Activated T-helper 2 cell treated with anti-CD3 and anti-CD28 coated beads, Interferon-gamma antibody, Interleukin-2, Interleukin-4, amounts not matched to agents 10 μg/mL and 5 μg/mL and 100 μg/mL, durations not matched to agents 14 hours and 24 hours and 36 hours (primary cell): ENCODE measurements at regions of chr5 and their contacts with region 1.

Region 1: DNA sequence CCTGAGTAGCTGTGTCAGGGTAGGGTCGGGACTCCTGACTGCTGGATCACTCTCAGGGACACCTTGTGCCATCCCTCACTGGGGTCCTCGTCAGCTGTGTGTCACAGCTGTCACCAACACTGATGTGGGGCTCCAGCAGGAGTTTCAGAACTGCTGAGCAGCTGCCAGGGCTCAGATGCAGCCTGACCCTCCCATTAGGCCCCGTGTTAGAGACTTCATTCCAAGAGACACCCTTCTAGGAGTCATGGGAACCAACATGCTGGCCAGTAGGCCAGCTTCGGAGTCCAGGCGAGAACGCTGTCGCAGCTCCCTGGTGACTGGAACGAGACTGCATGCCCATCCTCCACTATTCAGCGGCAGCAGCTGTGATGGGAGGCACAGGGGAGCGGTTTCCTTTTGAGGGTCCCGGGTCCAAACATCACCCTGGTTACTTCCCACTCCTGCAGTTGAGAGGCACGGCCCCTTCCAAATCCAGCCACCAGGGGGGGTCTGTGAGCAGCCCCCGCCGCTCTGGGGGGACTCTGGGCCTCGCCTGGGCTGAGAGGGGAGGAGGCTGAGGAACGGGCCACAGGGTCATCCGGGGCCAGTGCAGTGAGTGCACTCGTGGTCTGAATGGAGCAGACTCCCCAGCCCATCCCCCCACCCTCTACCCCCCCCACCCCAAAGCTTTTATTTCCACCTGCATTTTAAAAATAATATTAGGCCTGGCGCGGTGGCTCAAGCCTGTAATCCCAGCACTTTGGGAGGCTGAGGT is 12.6 kb upstream of the TCF7 start:
- DNase-seq: peak; percentile 57
- H3K4me3 Mint-ChIP-seq: no peak overlapping the region
- H3K27ac Mint-ChIP-seq: no peak overlapping the region
- H3K4me1 Mint-ChIP-seq: peaks cover 49% of the 10 kb centered on the region
- H3K27me3 Mint-ChIP-seq: peaks cover 33% of the 10 kb centered on the region

Region 2: GRCh38 chr5:134046801-134047686 is 54.8 kb before region 1 on chr5:
- intact Hi-C with region 1: no loop called
- DNase-seq: no peak
- H3K4me3 Mint-ChIP-seq: no peak overlapping the region
- H3K27ac Mint-ChIP-seq: no peak overlapping the region
- H3K4me1 Mint-ChIP-seq: no peaks in the 10 kb centered on the region
- H3K27me3 Mint-ChIP-seq: peaks cover 14% of the 10 kb centered on the region

Region 3: DNA sequence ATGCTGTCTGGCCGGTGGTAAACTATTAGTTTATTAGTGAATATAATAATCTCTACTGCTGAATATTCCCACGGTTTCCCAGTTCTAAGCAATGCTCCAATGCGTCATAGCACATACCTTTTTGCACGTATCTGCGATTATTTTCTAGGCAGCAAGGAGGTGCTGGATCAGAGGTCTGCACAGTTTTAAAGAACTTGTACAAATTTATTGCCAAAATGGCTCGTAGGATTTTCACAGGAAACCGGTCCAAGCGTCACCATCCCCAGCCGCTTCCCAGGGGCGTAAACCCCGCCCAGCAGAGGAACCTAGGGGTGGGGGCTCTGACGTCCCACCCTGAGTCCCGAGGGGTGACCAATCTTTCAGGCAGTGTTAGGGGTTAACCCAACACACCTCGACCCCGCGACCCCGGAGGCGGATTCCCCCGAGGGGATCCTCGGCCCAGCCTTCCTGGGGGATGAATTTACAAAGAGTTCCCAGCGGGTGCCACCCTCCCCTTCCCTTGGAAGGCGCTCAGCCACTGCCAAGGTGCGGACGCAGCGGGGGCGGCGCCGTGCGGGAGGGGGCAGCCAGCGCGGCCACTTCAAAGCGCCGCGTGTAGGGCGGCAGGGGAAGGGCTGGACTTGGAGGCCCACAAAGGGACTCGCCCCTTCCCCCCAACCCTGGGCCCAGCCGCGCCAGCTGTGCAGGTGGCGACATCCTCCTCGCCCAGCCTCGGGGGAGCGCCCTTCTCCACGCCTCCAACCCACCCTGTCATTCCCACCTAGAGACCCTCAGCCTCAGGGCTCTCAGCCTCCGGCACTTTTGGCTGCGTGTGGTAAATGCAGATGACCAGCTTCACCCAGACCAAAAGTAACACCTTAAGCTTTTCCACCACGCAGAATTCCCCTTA is 30.9 kb before region 1 on chr5:
- intact Hi-C with region 1: loop called (anchors 1 kb)
- DNase-seq: no peak
- H3K4me3 Mint-ChIP-seq: peak overlapping the region; percentile 27
- H3K27ac Mint-ChIP-seq: peak overlapping the region; percentile 48
- H3K4me1 Mint-ChIP-seq: peaks cover 34% of the 10 kb centered on the region
- H3K27me3 Mint-ChIP-seq: peaks cover 59% of the 10 kb centered on the region

Region 4: GRCh38 chr5:134086943-134087305 is 14.9 kb before region 1 on chr5:
- intact Hi-C with region 1: loop called (anchors 1 kb)
- DNase-seq: peak; percentile 76
- H3K4me3 Mint-ChIP-seq: peak overlapping the region; percentile 31
- H3K27ac Mint-ChIP-seq: peak overlapping the region; percentile 76
- H3K4me1 Mint-ChIP-seq: peaks cover 46% of the 10 kb centered on the region
- H3K27me3 Mint-ChIP-seq: peaks cover 57% of the 10 kb centered on the region

Region 5: DNA sequence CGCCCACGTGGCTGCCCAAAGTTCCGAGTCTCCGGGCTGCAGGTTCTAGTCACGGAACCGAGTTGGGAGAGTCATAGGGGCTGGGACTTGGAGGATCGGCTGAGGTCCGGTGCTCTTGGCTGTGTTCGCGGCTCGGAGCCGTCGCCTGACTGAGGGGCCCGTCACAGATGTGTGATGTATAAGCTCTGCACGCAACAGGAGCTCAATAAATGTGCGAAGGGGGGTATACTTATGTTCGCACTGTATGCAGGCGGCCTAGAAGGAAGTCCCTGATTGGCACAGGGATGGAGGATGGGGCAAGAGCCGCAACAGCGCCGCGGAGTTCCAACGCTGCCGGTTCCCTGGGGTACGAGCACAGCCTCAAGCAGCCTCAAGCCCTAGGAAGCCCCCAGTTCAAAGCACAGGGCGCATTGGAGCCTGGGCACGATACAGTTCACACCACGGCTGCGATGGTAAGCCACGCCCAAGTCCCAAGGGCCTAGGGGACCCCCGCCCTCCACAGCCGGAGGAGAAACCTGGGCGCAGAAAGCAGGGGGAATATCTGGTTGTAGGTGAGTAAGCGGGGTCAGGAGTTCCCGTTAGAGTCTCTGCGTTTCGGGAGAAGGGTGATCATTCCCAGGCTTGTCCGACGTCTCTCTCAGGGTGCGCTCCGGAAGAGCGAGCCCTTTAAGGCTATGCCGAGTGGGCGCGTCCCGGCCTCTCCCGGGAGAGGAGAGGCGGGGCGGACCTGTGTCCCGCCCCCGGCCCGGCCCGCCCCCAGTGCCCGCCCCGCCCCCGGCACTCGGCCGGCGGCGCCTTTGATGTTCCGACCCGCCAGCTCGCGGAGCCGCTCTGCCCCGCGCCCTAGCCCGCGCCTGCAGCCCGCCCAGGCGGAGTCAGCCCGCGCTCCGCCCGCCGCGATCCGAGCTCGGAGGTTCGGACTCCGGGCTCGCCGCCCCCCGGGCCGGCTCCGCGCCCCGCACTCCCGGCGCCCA is 12.3 kb after region 1 on chr5 and contains the start of gene TCF7:
- intact Hi-C with region 1: loop called (anchors 1 kb)
- DNase-seq: peak; percentile 61
- H3K4me3 Mint-ChIP-seq: peak within 1 kb of the TSS; percentile 76
- H3K27ac Mint-ChIP-seq: peak within 1 kb of the TSS; percentile 28
- H3K4me1 Mint-ChIP-seq: peaks cover 48% of the 10 kb centered on the region
- H3K27me3 Mint-ChIP-seq: peaks cover 36% of the 10 kb centered on the region
- total RNA-seq, gene TCF7: 8.4 and 10.0 TPM in 2 replicates

Region 6: DNA sequence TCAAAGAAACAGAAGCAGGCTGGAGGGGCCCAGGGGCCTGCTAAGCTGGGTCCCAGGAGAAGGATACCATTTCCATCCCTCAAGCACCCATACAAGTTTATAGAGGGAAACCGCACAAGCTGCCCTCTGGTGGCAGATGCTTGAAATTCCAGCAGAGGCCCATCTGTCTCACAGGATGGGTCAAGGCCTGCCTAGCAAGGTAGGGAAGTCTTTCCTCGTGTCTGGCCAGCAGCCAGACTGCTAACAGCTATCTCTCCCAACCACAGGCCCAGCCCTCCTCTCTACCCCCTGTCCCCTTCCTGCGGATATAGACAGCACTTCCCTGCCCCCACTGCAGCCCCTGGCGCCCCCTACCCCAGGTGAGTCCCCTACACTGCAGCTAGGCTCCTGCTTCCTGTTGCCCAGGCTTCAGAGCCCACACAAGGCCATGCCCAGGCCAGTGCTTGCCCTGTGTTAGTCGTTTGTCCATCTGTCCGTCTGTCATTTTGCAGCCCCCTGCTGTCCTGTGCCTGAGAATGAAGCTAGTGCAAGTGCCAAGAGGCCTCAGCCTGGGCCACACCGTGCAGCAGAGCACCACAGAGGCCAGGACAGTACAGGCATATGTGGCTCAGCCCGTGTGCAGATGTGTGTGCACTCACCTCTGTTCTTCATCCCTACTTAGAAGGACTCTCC is 38.8 kb after region 1 on chr5:
- intact Hi-C with region 1: loop called (anchors 1 kb)
- DNase-seq: peak; percentile 50
- H3K4me3 Mint-ChIP-seq: no peak overlapping the region
- H3K27ac Mint-ChIP-seq: no peak overlapping the region
- H3K4me1 Mint-ChIP-seq: peaks cover 44% of the 10 kb centered on the region
- H3K27me3 Mint-ChIP-seq: peaks cover 3% of the 10 kb centered on the region

Region 7: GRCh38 chr5:134304311-134304710 is 202.4 kb after region 1 on chr5:
- intact Hi-C with region 1: no loop called
- DNase-seq: no peak
- H3K4me3 Mint-ChIP-seq: no peak overlapping the region
- H3K27ac Mint-ChIP-seq: no peak overlapping the region
- H3K4me1 Mint-ChIP-seq: peaks cover 3% of the 10 kb centered on the region
- H3K27me3 Mint-ChIP-seq: peaks cover 3% of the 10 kb centered on the region